Endothelial cell of umbilical vein (primary cell): ENCODE measurements at regions of chr2 and their contacts with region 1.

Region 1: GRCh38 chr2:207166039-207166348 is 246 bp upstream of the KLF7 start:
- DNase-seq: peak; percentile 100
- H3K4me3 ChIP-seq: peak overlapping the region in 1 of 3 experiments; percentile 91
- H3K27ac ChIP-seq: peak overlapping the region; percentile 97
- H3K4me1 ChIP-seq: peaks cover 29% of the 10 kb centered on the region
- H3K27me3 ChIP-seq: no peaks in the 10 kb centered on the region
- CTCF ChIP-seq: no peak
- POLR2A ChIP-seq: no peak

Region 2: DNA sequence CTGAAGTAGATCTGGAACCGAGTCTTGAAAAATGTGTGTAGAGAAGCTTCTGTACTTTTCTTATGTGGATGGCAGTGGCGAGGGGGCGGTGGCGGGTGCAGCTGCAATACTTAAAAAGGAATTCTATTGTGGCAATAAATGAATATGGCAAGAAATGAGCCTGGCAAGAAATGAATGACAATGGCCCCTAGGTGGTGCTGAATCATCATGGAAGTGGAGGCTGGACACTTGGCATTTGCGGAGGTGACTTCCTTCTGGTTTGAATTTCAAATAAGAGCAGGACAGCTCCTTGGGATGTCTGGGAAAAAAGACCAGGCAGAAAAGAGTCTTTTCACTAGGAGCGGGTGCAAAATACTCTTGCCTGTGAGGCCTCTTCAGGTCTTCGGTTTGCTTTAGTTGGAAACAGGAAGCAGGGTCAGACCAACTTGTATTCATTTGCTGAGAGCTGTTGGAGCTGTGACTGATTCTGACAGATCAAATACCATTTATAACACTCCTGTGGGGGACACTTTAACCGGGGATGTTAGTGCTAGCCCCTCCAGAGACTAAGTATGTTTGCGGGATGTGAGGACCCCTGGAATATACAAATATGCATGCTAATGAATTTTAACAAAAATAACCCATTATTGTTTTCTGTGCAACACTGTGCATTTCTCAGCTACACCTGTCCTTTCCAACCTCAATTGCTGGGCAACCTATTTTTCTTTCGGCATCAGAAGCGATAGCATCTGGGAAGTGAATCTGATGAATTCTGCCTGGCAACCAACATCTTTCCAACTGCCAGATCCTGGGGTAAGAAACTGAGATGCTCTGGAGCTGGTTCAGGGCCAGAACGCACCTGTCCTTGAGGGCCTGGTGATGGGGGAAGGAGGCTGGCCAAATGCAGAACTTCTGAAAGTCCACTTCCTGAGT is 365.2 kb before region 1 on chr2:
- CTCF ChIA-PET with region 1: no interaction called
- POLR2A ChIA-PET with region 1: interaction called, 4 read pairs
- dilution Hi-C with region 1: no loop called
- intact Hi-C with region 1: loop called (anchors 1 kb)
- DNase-seq: peak; percentile 82
- H3K4me3 ChIP-seq: no peak overlapping the region
- H3K27ac ChIP-seq: no peak overlapping the region
- H3K4me1 ChIP-seq: peaks cover 14% of the 10 kb centered on the region
- H3K27me3 ChIP-seq: no peaks in the 10 kb centered on the region
- CTCF ChIP-seq: peak; percentile 55 to 68
- POLR2A ChIP-seq: no peak

Region 3: GRCh38 chr2:207008105-207008990 is 157.6 kb before region 1 on chr2:
- CTCF ChIA-PET with region 1: no interaction called
- POLR2A ChIA-PET with region 1: interaction called, 4 read pairs
- dilution Hi-C with region 1: no loop called
- intact Hi-C with region 1: loop called (anchors 1 kb)
- DNase-seq: peak; percentile 35
- H3K4me3 ChIP-seq: no peak overlapping the region
- H3K27ac ChIP-seq: peak overlapping the region; percentile 37
- H3K4me1 ChIP-seq: peaks cover 18% of the 10 kb centered on the region
- H3K27me3 ChIP-seq: no peaks in the 10 kb centered on the region
- CTCF ChIP-seq: peak in 1 of 2 donors; percentile 8
- POLR2A ChIP-seq: no peak

Region 4: DNA sequence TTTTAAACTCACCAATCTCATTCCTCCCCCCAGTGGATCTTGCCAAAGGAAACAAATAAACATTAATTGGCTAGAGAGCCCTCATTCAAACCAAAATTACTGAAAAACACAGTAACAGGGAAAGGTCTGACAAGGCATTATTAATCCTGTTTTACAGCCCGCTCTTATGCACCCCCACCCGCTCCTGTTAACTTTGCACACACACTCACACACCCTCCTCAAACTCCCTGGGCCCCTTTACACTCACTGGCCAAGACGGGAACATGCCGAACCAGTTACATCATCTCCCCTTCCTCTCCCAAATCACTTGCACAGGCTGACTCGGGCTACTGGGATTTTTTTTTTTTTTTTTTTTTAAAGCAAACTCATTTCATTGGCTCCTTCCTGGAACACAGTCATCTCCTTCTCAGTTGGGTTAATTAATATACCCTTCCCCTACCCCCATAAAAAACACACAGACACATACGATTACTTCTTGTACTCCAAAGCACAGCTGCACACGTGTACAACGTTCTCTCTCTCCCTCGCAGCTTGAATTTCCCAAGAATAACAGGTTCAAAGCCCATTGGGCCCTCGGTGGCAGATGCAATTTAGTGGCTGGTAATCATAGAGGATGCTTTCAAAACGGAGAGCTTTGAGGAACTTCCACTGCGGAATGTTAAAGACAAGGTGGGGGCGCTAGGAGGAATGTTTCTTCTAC is 32.0 kb before region 1 on chr2:
- CTCF ChIA-PET with region 1: interaction called, 3 read pairs
- POLR2A ChIA-PET with region 1: interaction called, 12 read pairs
- dilution Hi-C with region 1: no loop called
- intact Hi-C with region 1: loop called (anchors 1 kb)
- DNase-seq: peak; percentile 86
- H3K4me3 ChIP-seq: peak overlapping the region in 1 of 3 experiments; percentile 42
- H3K27ac ChIP-seq: peak overlapping the region; percentile 94
- H3K4me1 ChIP-seq: peaks cover 83% of the 10 kb centered on the region
- H3K27me3 ChIP-seq: no peaks in the 10 kb centered on the region
- CTCF ChIP-seq: no peak
- POLR2A ChIP-seq: peak; percentile 42

Region 5: GRCh38 chr2:207188626-207189419 is 22.8 kb after region 1 on chr2:
- CTCF ChIA-PET with region 1: no interaction called
- POLR2A ChIA-PET with region 1: no interaction called
- dilution Hi-C with region 1: no loop called
- intact Hi-C with region 1: no loop called
- DNase-seq: peak; percentile 72
- H3K4me3 ChIP-seq: no peak overlapping the region
- H3K27ac ChIP-seq: no peak overlapping the region
- H3K4me1 ChIP-seq: peaks cover 4% of the 10 kb centered on the region
- H3K27me3 ChIP-seq: no peaks in the 10 kb centered on the region
- CTCF ChIP-seq: no peak
- POLR2A ChIP-seq: no peak

Region 6: GRCh38 chr2:207230261-207231105 is 64.5 kb after region 1 on chr2:
- CTCF ChIA-PET with region 1: no interaction called
- POLR2A ChIA-PET with region 1: no interaction called
- dilution Hi-C with region 1: no loop called
- intact Hi-C with region 1: loop called (anchors 1 kb)
- DNase-seq: peak; percentile 38
- H3K4me3 ChIP-seq: no peak overlapping the region
- H3K27ac ChIP-seq: no peak overlapping the region
- H3K4me1 ChIP-seq: peaks cover 30% of the 10 kb centered on the region
- H3K27me3 ChIP-seq: no peaks in the 10 kb centered on the region
- CTCF ChIP-seq: peak; percentile 32 to 37
- POLR2A ChIP-seq: no peak

Region 7: DNA sequence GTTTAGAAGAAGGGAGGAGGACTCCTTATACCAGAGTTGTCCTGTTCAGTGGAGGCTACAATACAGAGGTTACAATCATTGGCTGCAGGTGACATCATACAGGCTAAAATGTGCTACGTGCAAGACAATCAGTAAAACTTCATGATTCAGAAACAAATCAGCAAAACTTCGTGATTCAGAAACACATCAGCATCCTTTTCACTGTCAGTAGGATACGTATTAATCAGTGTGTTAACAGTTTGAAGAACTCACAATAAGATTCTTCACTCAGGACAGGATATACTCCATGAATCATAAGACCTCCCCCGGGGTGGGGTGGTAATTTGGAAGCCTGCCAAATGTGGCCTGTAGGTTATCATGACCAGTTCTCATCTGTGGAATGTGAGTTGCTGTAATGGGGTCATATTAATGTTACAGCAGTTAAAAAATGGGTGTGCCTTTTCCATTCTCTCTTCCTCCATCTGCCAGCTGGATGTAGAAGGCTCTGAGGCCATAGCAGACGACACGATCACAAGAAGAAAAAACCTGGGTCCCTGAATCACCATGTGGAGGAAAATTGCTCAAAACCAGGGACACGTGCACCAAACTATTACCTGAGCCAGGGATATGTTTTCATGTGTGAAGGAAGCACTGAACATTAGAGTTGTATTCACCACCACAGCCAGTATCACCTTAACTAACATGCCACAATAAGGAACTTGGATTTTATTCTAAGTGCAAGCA is 229.0 kb after region 1 on chr2:
- CTCF ChIA-PET with region 1: no interaction called
- POLR2A ChIA-PET with region 1: no interaction called
- dilution Hi-C with region 1: no loop called
- intact Hi-C with region 1: loop called (anchors 1 kb)
- DNase-seq: peak; percentile 98
- H3K4me3 ChIP-seq: no peak overlapping the region
- H3K27ac ChIP-seq: peak overlapping the region; percentile 99
- H3K4me1 ChIP-seq: peaks cover 21% of the 10 kb centered on the region
- H3K27me3 ChIP-seq: no peaks in the 10 kb centered on the region
- CTCF ChIP-seq: no peak
- POLR2A ChIP-seq: peak; percentile 44

Region 8: GRCh38 chr2:207625018-207625907 is 459.3 kb after region 1 on chr2 and contains the start of gene METTL21A:
- CTCF ChIA-PET with region 1: no interaction called
- POLR2A ChIA-PET with region 1: no interaction called
- dilution Hi-C with region 1: no loop called
- intact Hi-C with region 1: loop called (anchors 5 kb)
- DNase-seq: peak; percentile 86
- H3K4me3 ChIP-seq: peak within 1 kb of the TSS; percentile 20 to 75 (median 67)
- H3K27ac ChIP-seq: peak within 1 kb of the TSS; percentile 61
- H3K4me1 ChIP-seq: peaks cover 6% of the 10 kb centered on the region
- H3K27me3 ChIP-seq: no peaks in the 10 kb centered on the region
- CTCF ChIP-seq: peak; percentile 39 to 56
- POLR2A ChIP-seq: no peak
- total RNA-seq, gene METTL21A: 12.8 and 14.0 TPM in 2 replicates